A673 (cell line): ENCODE measurements at regions of chr14 and their contacts with region 1.

Region 1: DNA sequence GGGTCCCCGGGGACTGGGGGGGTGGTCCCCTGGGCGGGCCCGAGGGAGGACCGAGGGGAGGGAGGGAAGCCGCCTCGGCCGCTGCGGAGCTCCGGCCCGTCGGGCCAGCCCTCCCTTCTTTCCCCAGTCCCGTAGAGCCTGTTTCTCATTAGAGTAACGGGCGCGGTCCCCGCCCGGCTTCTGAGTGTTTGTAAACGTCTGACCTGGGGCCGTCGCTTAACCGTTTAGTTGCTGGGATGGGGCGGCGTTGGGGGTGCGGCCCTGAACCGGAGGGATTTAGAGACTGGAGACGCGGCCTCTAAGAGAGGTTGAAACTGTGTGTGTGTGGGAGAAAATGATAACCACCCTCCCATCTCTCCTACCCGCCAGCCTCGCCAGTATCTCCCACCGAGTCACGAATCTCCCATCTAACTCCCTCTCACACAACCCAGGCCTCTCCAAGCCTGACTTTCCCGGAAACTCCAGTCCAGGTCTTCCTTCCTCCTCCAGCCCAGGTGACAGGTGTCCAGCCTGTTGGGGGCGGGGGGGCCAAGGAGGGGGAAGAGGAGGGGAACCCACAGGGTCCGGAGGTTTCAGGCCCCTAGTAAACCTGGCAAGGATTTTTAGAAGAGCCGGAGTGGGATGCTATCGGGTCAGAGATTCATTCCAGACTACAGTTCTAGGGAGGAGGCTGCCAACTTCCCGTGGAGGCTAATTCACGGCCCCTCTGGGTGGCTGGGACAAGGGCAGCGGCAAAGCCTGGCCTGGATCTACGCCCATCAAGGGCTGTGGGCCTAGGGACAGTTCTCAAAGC is 1.1 kb upstream of the NFATC4 start:
- DNase-seq: peak; percentile 96
- H3K4me3 ChIP-seq: peak overlapping the region; percentile 95
- H3K27ac ChIP-seq: peak overlapping the region; percentile 91
- H3K4me1 ChIP-seq: peaks cover 12% of the 10 kb centered on the region
- H3K27me3 ChIP-seq: no peaks in the 10 kb centered on the region
- CTCF ChIP-seq: no peak

Region 2: GRCh38 chr14:24332268-24332993 is 34.5 kb before region 1 on chr14:
- CTCF ChIA-PET with region 1: no interaction called
- POLR2A ChIA-PET with region 1: no interaction called
- intact Hi-C with region 1: loop called (anchors 1 kb)
- DNase-seq: peak; percentile 88
- H3K4me3 ChIP-seq: no peak overlapping the region
- H3K27ac ChIP-seq: no peak overlapping the region
- H3K4me1 ChIP-seq: peaks cover 10% of the 10 kb centered on the region
- H3K27me3 ChIP-seq: no peaks in the 10 kb centered on the region
- CTCF ChIP-seq: peak; percentile 79

Region 3: GRCh38 chr14:24351517-24351916 is 15.4 kb before region 1 on chr14:
- CTCF ChIA-PET with region 1: no interaction called
- POLR2A ChIA-PET with region 1: no interaction called
- intact Hi-C with region 1: no loop called
- DNase-seq: peak; percentile 62
- H3K4me3 ChIP-seq: no peak overlapping the region
- H3K27ac ChIP-seq: no peak overlapping the region
- H3K4me1 ChIP-seq: peaks cover 7% of the 10 kb centered on the region
- H3K27me3 ChIP-seq: no peaks in the 10 kb centered on the region
- CTCF ChIP-seq: peak; percentile 39

Region 4: GRCh38 chr14:24388474-24389179 is 21.7 kb after region 1 on chr14:
- CTCF ChIA-PET with region 1: no interaction called
- POLR2A ChIA-PET with region 1: no interaction called
- intact Hi-C with region 1: no loop called
- DNase-seq: no peak
- H3K4me3 ChIP-seq: no peak overlapping the region
- H3K27ac ChIP-seq: no peak overlapping the region
- H3K4me1 ChIP-seq: no peaks in the 10 kb centered on the region
- H3K27me3 ChIP-seq: no peaks in the 10 kb centered on the region
- CTCF ChIP-seq: no peak

Region 5: DNA sequence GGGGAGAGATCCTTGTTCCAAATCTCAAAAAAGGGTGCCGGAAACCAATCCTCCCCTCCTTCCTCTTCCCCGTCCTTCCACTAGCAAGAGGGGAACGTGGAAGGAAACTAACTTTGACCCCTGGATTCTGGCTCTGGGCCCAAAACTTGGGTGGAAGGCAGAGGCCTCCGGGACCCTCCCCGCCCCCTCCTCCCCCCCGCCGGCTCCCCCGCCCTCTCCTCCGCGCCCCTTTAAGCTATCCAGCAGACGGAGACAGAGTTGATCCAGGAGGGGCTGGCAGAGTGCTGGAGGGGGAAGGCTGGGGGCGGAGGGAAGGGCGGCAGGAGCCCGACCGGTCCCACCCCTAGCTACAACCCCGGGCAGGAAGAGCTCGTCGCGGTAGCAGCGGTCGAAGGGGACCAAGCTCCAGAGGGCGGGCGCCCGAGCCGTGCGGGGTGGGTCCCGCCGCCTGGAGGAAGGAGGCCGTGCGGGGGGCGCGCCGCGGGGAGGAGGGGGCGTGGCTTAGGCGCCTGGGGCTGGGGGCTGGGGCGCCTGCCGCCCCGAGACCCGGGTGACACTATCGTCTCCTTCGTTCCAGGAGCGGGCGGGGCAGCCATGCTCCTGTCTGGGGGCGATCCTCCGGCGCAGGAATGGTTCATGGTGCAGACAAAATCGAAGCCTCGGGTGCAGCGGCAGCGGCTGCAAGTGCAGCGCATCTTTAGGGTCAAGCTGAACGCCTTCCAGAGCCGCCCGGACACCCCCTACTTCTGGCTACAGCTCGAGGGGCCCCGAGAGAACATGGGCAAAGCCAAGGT is 31.9 kb after region 1 on chr14 and contains the start of gene NYNRIN:
- CTCF ChIA-PET with region 1: interaction called, 4 read pairs
- POLR2A ChIA-PET with region 1: no interaction called
- intact Hi-C with region 1: loop called (anchors 1 kb)
- DNase-seq: peak; percentile 54
- H3K4me3 ChIP-seq: peak within 1 kb of the TSS; percentile 62
- H3K27ac ChIP-seq: peak within 1 kb of the TSS; percentile 58
- H3K4me1 ChIP-seq: peaks cover 18% of the 10 kb centered on the region
- H3K27me3 ChIP-seq: no peaks in the 10 kb centered on the region
- CTCF ChIP-seq: no peak
- total RNA-seq, gene NYNRIN: 8.6 and 17.3 TPM in 2 replicates

Region 6: GRCh38 chr14:24411443-24412389 is 44.8 kb after region 1 on chr14:
- CTCF ChIA-PET with region 1: no interaction called
- POLR2A ChIA-PET with region 1: no interaction called
- intact Hi-C with region 1: loop called (anchors 5 kb)
- DNase-seq: peak; percentile 69
- H3K4me3 ChIP-seq: no peak overlapping the region
- H3K27ac ChIP-seq: no peak overlapping the region
- H3K4me1 ChIP-seq: no peaks in the 10 kb centered on the region
- H3K27me3 ChIP-seq: no peaks in the 10 kb centered on the region
- CTCF ChIP-seq: peak; percentile 74

Region 7: GRCh38 chr14:24431569-24432258 is 64.8 kb after region 1 on chr14:
- CTCF ChIA-PET with region 1: interaction called, 14 read pairs
- POLR2A ChIA-PET with region 1: no interaction called
- intact Hi-C with region 1: loop called (anchors 2 kb)
- DNase-seq: peak; percentile 94
- H3K4me3 ChIP-seq: peak overlapping the region; percentile 75
- H3K27ac ChIP-seq: peak overlapping the region; percentile 87
- H3K4me1 ChIP-seq: peaks cover 18% of the 10 kb centered on the region
- H3K27me3 ChIP-seq: no peaks in the 10 kb centered on the region
- CTCF ChIP-seq: peak; percentile 99

Region 8: DNA sequence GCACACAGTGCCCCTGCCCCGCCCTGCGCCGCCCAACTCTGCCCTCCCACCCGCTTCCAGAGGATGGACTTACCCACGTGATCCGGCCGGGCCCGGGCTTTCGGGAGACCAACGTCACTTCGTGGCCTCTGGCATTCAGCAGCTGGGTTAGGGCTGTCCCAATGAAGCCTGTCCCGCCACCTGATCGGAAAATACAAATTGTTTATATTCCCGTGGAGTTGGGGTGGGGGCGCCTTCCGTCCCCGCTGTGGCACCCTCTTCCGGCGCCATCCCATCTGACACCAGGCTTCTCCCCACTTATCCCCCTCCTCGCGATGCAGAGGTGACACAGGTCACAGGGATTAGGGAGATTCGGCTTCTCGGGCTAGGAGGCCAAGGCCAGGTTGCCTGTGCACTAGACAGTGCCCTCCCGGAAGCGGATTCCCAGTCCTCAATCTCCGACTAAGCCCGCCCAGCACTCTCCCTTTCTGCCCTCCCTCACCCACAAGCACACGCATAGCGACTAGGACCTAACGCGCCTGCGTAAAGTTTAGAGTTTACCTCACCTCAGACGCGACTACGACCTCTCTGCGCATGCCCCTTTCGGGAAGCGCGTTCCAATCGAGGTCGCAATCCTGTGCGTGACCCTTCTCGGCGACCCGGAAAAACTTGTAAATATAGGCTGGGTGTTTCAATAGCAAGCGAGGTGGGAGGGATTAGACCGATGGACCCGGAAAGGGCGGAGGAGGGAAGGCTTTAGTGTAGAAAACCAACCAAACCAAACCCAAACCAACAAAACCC is 75.5 kb after region 1 on chr14 and contains the start of gene SDR39U1:
- CTCF ChIA-PET with region 1: no interaction called
- POLR2A ChIA-PET with region 1: interaction called, 16 read pairs
- intact Hi-C with region 1: no loop called
- DNase-seq: peak; percentile 99
- H3K4me3 ChIP-seq: peak within 1 kb of the TSS; percentile 76
- H3K27ac ChIP-seq: peak within 1 kb of the TSS; percentile 97
- H3K4me1 ChIP-seq: peaks cover 11% of the 10 kb centered on the region
- H3K27me3 ChIP-seq: no peaks in the 10 kb centered on the region
- CTCF ChIP-seq: 0 out of 2 replicates have a peak, but pooled peaks have one; percentile 9
- total RNA-seq, gene SDR39U1: 49.1 and 52.1 TPM in 2 replicates

Region 9: GRCh38 chr14:24952851-24953666 is 586.1 kb after region 1 on chr14:
- CTCF ChIA-PET with region 1: no interaction called
- POLR2A ChIA-PET with region 1: no interaction called
- intact Hi-C with region 1: no loop called
- DNase-seq: peak; percentile 27
- H3K4me3 ChIP-seq: no peak overlapping the region
- H3K27ac ChIP-seq: no peak overlapping the region
- H3K4me1 ChIP-seq: no peaks in the 10 kb centered on the region
- H3K27me3 ChIP-seq: no peaks in the 10 kb centered on the region
- CTCF ChIP-seq: peak; percentile 44